ENCODE measurements at regions of chr3 and their contacts with region 1.

Region 1: DNA sequence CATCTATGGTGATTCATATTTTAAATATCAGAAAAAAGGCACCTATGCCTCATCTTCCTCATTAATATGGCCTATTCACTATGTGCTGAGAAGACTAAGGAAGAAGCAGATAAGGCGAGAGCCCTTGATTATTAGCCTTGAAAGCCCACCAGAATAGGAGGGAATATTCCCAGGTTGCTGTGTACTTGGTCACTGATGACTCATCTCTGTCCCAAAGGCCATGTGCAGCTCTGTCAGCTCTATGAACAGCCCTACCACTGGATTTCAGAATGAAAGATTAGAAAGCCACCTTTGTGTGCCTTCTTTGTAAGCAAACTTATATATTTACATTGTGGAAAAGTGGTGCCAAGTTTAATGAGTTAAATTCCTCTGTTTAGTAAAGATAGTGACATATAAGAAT is 211.5 kb downstream of the NFKBIZ start:
- DNase-seq: no peak
- ATAC-seq: no peak
- H3K4me3 ChIP-seq: no peak overlapping the region
- H3K4me3 Mint-ChIP-seq: no peak overlapping the region
- H3K27ac ChIP-seq: no peak overlapping the region
- H3K27ac Mint-ChIP-seq: no peak overlapping the region
- H3K4me1 ChIP-seq: peaks cover 18 to 30% of the 10 kb centered on the region in 2 experiments
- H3K4me1 Mint-ChIP-seq: peaks cover 37 to 41% (median 39%) of the 10 kb centered on the region in 3 donors
- H3K27me3 ChIP-seq: no peaks in the 10 kb centered on the region
- H3K27me3 Mint-ChIP-seq: no peaks in the 10 kb centered on the region

Region 2: DNA sequence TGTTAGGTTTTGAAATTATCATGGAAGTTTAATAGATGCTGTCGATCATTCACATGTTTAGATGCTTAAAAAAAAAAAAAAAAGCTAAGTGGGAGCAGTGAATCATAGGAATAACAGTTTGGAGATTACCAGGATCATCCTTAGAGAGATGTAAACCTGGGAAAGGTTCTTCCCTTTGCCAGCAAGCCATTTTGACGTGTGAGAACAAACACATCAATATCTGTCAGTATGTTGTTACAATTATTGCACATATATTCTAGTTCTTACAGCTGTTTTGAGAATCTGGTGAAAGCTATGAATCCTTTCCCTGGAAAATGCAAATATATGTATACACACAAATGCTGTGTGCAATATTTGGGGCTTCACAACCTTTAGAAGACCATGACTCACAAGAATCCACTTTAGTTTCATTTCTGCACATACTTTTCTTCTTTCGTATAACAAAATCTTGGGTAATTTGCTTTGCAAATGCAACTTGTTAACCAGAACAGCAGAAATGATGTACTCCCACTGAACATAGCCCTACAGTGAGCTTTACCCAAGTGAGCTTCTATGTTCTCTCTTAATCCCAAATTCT is 199.5 kb before region 1 on chr3:
- CTCF ChIA-PET with region 1: no interaction called
- POLR2A ChIA-PET with region 1: interaction called, 3 to 10 read pairs
- DNase-seq: no peak
- ATAC-seq: peak in 2 of 4 experiments; percentile 9 to 15
- H3K4me3 ChIP-seq: no peak overlapping the region
- H3K4me3 Mint-ChIP-seq: no peak overlapping the region
- H3K27ac ChIP-seq: no peak overlapping the region
- H3K27ac Mint-ChIP-seq: peak overlapping the region; percentile 24 to 25
- H3K4me1 ChIP-seq: peaks cover 0 to 4% of the 10 kb centered on the region in 2 experiments
- H3K4me1 Mint-ChIP-seq: peaks cover 36 to 40% (median 37%) of the 10 kb centered on the region in 3 donors
- H3K27me3 ChIP-seq: no peaks in the 10 kb centered on the region
- H3K27me3 Mint-ChIP-seq: no peaks in the 10 kb centered on the region

Region 3: GRCh38 chr3:102089904-102090492 is 29.2 kb after region 1 on chr3:
- CTCF ChIA-PET with region 1: no interaction called
- POLR2A ChIA-PET with region 1: no interaction called
- DNase-seq: no peak
- ATAC-seq: no peak
- H3K4me3 ChIP-seq: no peak overlapping the region
- H3K4me3 Mint-ChIP-seq: no peak overlapping the region
- H3K27ac ChIP-seq: no peak overlapping the region
- H3K27ac Mint-ChIP-seq: no peak overlapping the region
- H3K4me1 ChIP-seq: peaks cover 7 to 13% of the 10 kb centered on the region in 2 experiments
- H3K4me1 Mint-ChIP-seq: peaks cover 27 to 34% (median 32%) of the 10 kb centered on the region in 3 donors
- H3K27me3 ChIP-seq: no peaks in the 10 kb centered on the region
- H3K27me3 Mint-ChIP-seq: no peaks in the 10 kb centered on the region

Measured in T-cell (primary cell).